ENCODE measurements at regions of chr7 and their contacts with region 1.

Region 1: DNA sequence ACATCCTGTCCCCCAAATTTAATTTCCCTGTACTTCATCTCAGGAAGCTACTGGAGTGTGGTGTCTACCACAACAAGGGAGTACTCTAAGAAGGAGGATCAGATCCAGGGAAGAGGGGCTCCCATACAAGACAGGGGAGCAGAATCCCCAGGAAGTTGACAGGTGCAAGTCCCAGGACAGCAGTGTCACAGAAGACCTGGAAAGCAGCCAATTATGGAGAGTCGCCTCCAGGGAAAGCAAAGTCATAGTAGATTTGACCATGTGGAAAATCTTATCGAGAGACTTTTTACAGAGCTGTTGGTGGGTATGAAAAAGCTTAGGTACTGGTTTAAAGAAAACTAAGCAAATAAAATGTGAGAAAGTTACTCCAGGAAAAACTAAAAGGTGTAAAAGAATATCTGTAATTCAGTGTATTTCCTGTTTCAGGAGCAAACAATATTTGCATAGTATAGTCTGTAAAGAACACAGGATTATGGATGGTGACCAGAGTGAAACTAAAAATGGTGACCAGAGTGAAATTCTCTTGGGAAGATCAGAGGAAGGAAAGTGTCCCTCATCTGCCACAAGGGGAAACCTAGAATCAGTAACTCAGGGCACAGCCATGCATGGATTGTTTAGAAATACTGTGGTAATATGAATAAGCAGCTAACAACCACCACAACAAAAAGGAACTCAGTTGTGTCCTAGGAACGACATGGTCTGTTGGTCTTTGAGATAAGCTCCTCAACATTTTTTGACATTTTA is 44.5 kb downstream of the LANCL2 start:
- DNase-seq: no peak
- H3K4me3 ChIP-seq: no peak overlapping the region
- H3K27ac ChIP-seq: no peak overlapping the region
- H3K4me1 ChIP-seq: no peaks in the 10 kb centered on the region
- H3K27me3 ChIP-seq: no peaks in the 10 kb centered on the region
- CTCF ChIP-seq: peak in 1 of 3 experiments; percentile 5; a peak in 1 of 4 replicates
- EP300 ChIP-seq: no peak
- POLR2A ChIP-seq: no peak
- RAD21 ChIP-seq: no peak

Region 2: DNA sequence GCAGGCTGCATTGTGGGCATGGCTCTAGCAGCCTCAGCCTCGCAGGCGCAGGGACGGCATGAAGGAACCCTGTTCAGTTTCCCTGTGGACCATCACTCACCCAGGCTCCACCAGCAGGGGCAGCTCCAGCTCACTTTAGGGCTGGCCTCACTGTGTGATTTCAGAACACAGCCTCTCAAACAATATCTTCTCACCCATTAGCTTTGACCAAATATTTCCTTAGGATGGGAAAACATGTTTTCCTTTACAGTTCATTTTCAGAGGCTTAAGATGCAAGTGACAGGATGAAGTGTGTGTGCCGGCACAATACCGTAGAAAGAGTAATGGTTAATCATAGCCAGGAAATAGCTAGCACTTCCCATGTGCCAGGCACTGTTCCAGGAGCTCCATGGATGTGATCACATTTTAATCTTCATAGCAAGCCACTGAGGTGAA is 13.6 kb after region 1 on chr7:
- CTCF ChIA-PET with region 1: interaction called, 10 read pairs
- POLR2A ChIA-PET with region 1: no interaction called
- DNase-seq: no peak
- H3K4me3 ChIP-seq: no peak overlapping the region
- H3K27ac ChIP-seq: no peak overlapping the region
- H3K4me1 ChIP-seq: peaks cover 0 to 2% (median under 1%) of the 10 kb centered on the region in 4 experiments; a peak in 2 of 7 replicates
- H3K27me3 ChIP-seq: no peaks in the 10 kb centered on the region
- CTCF ChIP-seq: peak; percentile 12 to 42 (median 42); a peak in 3 of 4 replicates
- EP300 ChIP-seq: no peak
- POLR2A ChIP-seq: no peak
- RAD21 ChIP-seq: peak; percentile 34 to 39; a peak in 2 of 4 replicates

Measured in H1 (cell line).